Dorsolateral prefrontal cortex (tissue), 120 donors: ENCODE measurements at regions of chr11 and their contacts with region 1.

Region 1: GRCh38 chr11:126929179-126930061 is 71.2 kb downstream of the KIRREL3 start:
- DNase-seq: no peak
- H3K4me3 ChIP-seq: no peak overlapping the region
- H3K27ac ChIP-seq: peak overlapping the region in 53 of 59 donors; percentile 3 to 81 (median 60)
- H3K27me3 ChIP-seq: no peaks in the 10 kb centered on the region
- CTCF ChIP-seq: no peak

Region 2: GRCh38 chr11:126969865-126970479 is 40.6 kb after region 1 on chr11:
- intact Hi-C with region 1: loop called in 1 of 2 experiments (anchors 5 kb)
- DNase-seq: peak in 1 of 10 donors; percentile 42
- H3K4me3 ChIP-seq: peak overlapping the region in 7 of 59 donors; percentile 5 to 27 (median 10)
- H3K27ac ChIP-seq: peak overlapping the region in 49 of 59 donors; percentile 6 to 88 (median 59)
- H3K27me3 ChIP-seq: no peaks in the 10 kb centered on the region
- CTCF ChIP-seq: peak; percentile 37 to 85 (median 66)

Region 3: DNA sequence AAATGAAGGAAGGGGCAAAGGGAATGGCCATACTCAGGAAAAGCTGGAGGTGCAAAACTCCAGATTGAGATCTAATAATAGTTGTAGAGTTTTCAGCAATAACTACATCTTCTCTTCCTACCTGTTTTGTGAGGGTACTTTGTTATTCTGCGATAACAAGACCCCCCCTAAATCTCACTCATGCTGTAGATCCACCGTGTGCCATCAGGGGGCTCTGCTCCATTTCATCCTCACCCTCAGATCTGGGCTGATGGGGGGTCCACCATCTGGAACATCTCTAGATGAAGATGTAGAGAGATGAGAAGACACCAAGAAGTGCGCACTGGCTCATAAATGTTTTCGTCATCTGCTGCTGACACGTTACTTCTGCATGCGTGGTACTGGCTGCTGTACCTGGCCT is 207.0 kb after region 1 on chr11:
- intact Hi-C with region 1: no loop called
- DNase-seq: no peak
- H3K4me3 ChIP-seq: no peak overlapping the region
- H3K27ac ChIP-seq: no peak overlapping the region
- H3K27me3 ChIP-seq: peaks cover 0 to 12% (median 0%) of the 10 kb centered on the region in 45 donors
- CTCF ChIP-seq: no peak